Sciatic nerve (tissue), 2 donors: ENCODE measurements at regions of chr21 and their contacts with region 1.

Region 1: GRCh38 chr21:46635324-46636172 is at the start of gene PRMT2:
- DNase-seq: peak; percentile 99
- ATAC-seq: peak; percentile 98
- total RNA-seq, gene PRMT2: 178 TPM

Region 2: DNA sequence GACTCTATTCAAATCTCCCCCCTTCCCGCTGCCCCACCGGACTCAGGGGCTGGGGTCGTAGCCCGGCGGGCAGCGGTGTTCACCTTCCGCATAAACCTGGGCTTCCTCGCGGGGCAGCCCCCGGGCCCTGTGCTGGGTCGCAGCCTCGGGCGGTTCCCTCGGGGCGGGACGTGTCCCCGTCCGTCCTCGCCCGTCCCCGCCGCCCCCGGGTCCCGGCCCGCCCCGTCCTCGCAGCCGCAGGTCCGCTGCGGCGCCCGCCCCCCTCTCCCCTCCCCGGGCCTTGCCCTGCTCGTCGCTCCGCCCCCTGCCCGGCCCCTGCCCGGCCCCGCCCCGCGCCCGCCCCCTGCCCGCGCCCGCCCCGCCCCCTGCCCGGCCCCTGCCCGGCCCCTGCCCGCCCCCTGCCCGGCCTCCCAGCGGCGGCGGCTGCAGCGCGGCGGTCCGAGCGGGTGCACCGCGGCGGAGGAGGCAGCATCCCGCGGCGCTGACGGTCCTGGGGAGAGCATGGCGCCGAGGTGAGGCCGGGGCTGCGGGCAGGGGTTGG is 1230.7 kb before region 1 on chr21 and contains the start of gene COL18A1:
- intact Hi-C with region 1: no loop called
- DNase-seq: peak; percentile 81
- ATAC-seq: peak; percentile 37
- total RNA-seq, gene COL18A1: 129 TPM

Region 3: DNA sequence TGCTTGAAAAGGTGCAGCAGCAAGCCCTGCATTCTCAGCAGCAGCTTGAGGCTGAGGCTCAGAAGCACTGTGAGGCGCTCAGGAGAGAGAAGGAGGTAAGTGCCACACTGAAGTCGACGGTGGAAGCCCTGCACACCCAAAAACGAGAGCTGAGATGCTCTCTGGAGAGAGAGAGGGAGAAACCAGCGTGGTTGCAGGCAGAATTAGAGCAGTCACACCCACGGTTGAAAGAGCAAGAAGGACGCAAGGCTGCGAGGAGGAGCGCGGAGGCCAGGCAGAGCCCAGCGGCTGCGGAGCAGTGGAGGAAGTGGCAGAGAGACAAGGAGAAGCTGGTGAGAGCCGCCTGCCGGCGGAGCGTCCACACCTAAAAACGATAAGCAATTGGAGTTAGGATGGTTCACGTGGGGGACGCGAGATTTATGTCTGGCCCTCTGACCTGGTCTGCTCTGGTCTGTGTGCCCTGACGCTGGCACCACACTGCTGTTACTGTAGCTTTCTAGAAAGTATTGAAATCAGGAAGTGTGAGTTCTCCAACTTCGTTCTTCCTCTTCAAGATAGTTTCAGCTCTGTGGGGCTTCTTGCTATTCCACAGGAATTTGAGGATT is 203.6 kb before region 1 on chr21:
- intact Hi-C with region 1: no loop called
- DNase-seq: no peak
- ATAC-seq: peak; percentile 49

Region 4: DNA sequence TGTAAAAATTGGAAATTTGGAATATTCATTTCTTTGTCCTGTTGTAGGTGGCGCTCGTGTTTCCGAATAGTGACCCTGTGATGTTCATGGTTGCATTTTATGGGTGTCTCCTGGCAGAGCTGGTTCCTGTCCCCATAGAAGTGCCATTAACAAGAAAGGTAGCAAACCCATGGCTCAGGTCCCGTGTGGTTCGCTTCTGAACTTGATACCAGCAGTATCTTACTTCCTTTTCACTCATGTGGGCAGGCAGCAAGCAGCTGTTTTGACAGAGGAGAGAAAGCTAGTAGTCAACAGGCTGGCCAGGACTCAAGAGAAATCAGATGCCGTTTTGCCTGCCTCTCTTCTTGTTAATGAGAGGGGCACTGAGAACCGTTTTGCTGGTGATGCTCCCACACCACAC is 103.5 kb before region 1 on chr21:
- intact Hi-C with region 1: no loop called
- DNase-seq: no peak
- ATAC-seq: no peak

Region 5: GRCh38 chr21:46581780-46582307 is 53.7 kb before region 1 on chr21:
- intact Hi-C with region 1: no loop called
- DNase-seq: no peak
- ATAC-seq: no peak

Region 6: GRCh38 chr21:46600978-46601377 is 34.6 kb before region 1 on chr21:
- intact Hi-C with region 1: loop called (anchors 2 kb)
- DNase-seq: no peak
- ATAC-seq: no peak